Heart right ventricle (tissue), 16 donors: ENCODE measurements at regions of chr10 and their contacts with region 1.

Region 1: DNA sequence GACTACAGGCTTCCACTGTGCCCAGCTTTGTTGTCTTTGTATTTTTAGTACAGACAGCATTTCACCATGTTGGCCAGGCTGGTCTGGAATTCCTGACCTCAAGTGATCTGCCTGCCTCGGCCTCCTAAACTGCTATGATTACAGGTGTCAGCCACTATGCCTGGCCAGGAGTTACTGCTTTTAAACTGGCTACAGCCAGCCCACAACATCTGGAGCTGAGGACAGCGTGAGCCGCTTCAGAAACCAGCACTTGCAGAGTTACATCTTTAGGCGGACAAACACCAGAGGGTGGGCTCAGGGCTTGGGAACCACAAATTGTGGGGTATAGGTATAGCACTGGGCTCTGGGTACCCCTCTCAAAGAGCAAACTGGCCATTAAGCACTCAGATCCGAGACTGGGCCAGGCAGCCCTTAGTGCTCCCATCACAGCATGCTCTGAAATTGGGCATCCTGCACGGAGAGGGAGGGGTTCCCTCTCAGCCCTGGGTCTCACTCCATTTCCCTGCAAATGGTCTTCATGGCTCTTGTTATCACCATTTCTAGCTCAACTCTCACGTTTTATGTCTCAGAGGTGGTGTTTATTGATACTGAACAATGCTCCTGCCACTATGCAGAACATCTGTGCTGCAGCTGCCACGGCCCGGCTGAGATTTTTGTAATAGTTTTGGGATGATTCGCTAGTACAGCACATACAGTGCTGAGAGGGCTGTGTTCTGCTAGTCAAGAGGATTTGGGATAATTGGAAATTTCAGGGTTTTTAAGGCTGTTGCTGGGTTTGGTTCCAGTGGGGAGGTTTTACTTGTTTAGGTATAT is 146.4 kb upstream of the LYZL2 start:
- DNase-seq: no peak
- ATAC-seq: peak in 5 of 8 donors; percentile 64 to 87 (median 81)
- H3K4me3 ChIP-seq: no peak overlapping the region
- H3K27ac ChIP-seq: peak overlapping the region in 4 of 10 donors; percentile 25 to 84 (median 56)
- H3K4me1 ChIP-seq: peaks cover 0 to 6% (median 0%) of the 10 kb centered on the region in 9 donors
- H3K27me3 ChIP-seq: peaks cover 0 to 4% (median 0%) of the 10 kb centered on the region in 7 donors
- CTCF ChIP-seq: no peak

Region 2: GRCh38 chr10:30270247-30270646 is 505.7 kb before region 1 on chr10:
- intact Hi-C with region 1: no loop called
- DNase-seq: no peak
- ATAC-seq: no peak
- H3K4me3 ChIP-seq: no peak overlapping the region
- H3K27ac ChIP-seq: no peak overlapping the region
- H3K4me1 ChIP-seq: no peaks in the 10 kb centered on the region
- H3K27me3 ChIP-seq: peaks cover 0 to 23% (median 5%) of the 10 kb centered on the region in 7 donors
- CTCF ChIP-seq: peak in 1 of 9 donors; percentile 17

Region 3: GRCh38 chr10:31770307-31770902 is 994.4 kb after region 1 on chr10:
- intact Hi-C with region 1: loop called in 2 of 10 experiments (anchors 10 kb)
- DNase-seq: peak in 1 of 2 donors; percentile 60
- ATAC-seq: peak in 6 of 8 donors; percentile 63 to 85 (median 72)
- H3K4me3 ChIP-seq: no peak overlapping the region
- H3K27ac ChIP-seq: peak overlapping the region in 2 of 10 donors; percentile 1 to 11
- H3K4me1 ChIP-seq: peaks cover 0 to 14% (median 0%) of the 10 kb centered on the region in 9 donors
- H3K27me3 ChIP-seq: no peaks in the 10 kb centered on the region
- CTCF ChIP-seq: peak; percentile 64 to 91 (median 85)